Sigmoid colon (tissue), 7 donors: ENCODE measurements at regions of chr11 and their contacts with region 1.

Region 1: GRCh38 chr11:65497141-65498041 is 1.5 kb upstream of the MALAT1 start:
- DNase-seq: peak; percentile 100
- H3K4me3 ChIP-seq: peak overlapping the region; percentile 73 to 92 (median 84)
- H3K27ac ChIP-seq: peak overlapping the region; percentile 92 to 100 (median 97)
- H3K4me1 ChIP-seq: peaks cover 3 to 48% (median 47%) of the 10 kb centered on the region in 4 donors
- H3K27me3 ChIP-seq: no peaks in the 10 kb centered on the region
- CTCF ChIP-seq: no peak
- EP300 ChIP-seq: peak; percentile 90 to 100 (median 95)
- POLR2A ChIP-seq: peak; percentile 82 to 87

Region 2: DNA sequence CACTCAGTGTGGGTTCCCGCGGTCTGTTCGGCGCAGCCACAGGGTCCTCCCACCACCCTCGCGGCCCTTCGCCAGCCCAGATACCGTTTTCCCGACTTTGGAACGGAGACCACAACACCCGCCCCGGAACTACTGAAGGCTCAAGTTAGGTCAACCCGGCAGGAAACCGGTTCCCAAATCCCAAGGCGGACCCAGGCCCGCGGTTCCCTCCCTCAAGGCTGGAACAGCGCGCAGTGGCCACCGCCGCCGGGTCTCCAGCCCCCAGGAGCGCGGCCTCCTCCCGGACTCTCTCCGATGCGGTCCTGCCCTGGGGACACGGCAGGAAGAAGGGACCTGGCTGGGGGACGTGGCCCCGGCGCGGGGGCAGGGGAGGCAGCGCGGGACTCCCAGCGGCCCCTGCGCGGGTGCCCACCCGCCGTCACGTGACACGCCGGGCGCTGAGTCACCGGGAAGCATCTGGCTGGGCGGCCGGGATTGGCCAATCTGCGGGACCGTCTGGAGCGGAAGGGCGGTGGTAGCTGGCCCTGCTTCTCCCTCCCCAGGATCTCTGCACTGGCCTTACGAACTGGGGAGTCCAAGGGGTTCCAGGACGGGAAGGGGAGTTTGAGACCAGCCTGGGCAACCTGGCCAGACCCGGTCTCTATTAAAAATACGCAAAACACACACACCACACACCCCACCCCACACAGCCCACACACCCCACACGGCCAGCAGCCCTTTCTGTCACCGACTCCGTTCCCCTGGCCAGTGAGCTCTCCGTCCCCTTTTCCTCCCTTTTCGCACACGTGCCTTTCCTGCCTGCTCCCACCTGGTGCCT is 20.0 kb before region 1 on chr11:
- intact Hi-C with region 1: loop called (anchors 1 kb)
- DNase-seq: peak; percentile 99
- H3K4me3 ChIP-seq: peak overlapping the region; percentile 74 to 91 (median 80)
- H3K27ac ChIP-seq: peak overlapping the region; percentile 92 to 100 (median 97)
- H3K4me1 ChIP-seq: peaks cover 0 to 72% (median 66%) of the 10 kb centered on the region in 4 donors
- H3K27me3 ChIP-seq: no peaks in the 10 kb centered on the region
- CTCF ChIP-seq: no peak
- EP300 ChIP-seq: peak in 2 of 4 donors; percentile 51 to 93
- POLR2A ChIP-seq: peak; percentile 90 to 96

Region 3: DNA sequence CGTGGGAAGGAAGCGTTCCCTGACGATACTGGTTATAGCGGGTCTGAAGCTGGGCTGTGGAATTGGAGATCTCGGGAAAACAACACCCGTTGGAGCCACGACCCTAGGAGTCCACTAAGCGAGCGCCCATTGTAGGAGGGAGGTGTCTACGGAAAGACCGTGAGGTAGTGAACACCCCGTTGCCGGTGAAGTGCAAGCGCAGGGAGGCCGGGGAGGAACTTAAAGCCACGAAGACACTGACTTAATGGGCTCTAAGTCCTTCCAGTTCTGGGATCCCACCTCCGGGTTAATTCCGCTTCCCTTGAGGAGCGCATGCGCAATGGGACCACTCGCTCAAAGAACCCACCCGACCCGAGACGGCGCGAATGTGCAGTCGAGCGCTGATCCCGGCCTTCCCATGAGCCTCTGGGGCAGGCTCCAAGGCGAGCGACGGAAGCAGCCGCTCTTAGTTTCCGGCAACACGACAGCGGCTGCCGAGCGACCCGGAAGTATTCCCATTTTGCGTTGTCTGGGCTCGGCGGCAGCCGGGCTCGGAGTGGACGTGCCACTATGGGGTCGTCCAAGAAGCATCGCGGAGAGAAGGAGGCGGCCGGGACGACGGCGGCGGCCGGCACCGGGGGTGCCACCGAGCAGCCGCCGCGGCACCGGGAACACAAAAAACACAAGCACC is 464.0 kb after region 1 on chr11 and contains the start of gene SART1:
- intact Hi-C with region 1: no loop called
- DNase-seq: peak; percentile 99
- H3K4me3 ChIP-seq: peak within 1 kb of the TSS; percentile 92 to 99 (median 96)
- H3K27ac ChIP-seq: peak within 1 kb of the TSS; percentile 90 to 94 (median 92)
- H3K4me1 ChIP-seq: peaks cover 0 to 31% (median 30%) of the 10 kb centered on the region in 4 donors
- H3K27me3 ChIP-seq: no peaks in the 10 kb centered on the region
- CTCF ChIP-seq: no peak
- EP300 ChIP-seq: peak in 1 of 4 donors; percentile 49
- POLR2A ChIP-seq: peak in 1 of 2 donors; percentile 58
- total RNA-seq, gene SART1: 33.8 to 38.8 (median 37.0) TPM